ENCODE measurements at regions of chr7 and their contacts with region 1.

Region 1: DNA sequence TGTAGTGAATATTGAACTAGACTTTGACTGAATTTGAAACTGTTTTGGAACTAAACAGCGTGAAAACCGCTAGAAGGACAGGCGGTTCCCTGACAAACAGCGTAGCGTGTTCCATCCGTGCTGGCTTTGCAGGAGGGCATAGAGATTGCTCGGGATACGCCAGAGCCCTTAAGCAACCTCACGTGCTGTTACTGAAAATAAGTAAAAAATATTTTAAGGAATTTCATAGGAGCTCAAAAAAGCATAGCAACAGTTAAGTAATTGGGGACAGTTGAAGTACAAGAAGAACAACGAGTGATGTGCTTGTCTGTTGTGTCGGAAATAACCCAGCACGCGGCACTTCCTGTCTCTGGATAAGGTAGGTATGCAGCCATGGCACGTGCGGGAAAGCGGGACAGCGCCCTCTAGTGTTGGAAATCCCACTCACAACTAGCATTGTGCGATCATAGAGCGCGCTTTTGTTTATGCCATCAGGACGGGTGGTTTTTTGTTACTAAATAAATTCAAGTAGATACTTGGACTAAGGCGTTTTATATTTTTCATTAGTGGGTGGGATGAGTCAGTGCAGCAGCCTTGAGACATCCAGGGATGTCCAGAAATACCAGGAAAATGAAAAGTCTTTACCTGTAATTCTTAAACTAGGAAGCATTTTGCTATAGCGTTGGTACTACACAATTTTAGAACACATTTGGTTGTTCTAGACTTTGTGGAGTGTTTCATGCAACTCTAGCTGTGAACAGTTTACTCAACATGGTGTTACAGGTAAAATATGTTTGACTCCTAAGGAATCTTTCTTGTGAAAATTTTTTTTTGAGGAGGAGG is 50.4 kb downstream of the DNAJB6 start:
- DNase-seq: peak; percentile 92
- H3K4me3 Mint-ChIP-seq: peak overlapping the region; percentile 16
- H3K27ac Mint-ChIP-seq: peak overlapping the region; percentile 64
- H3K4me1 Mint-ChIP-seq: peaks cover 56% of the 10 kb centered on the region
- H3K27me3 Mint-ChIP-seq: no peaks in the 10 kb centered on the region

Region 2: GRCh38 chr7:157355784-157356539 is 31.2 kb before region 1 on chr7:
- CTCF ChIA-PET with region 1: interaction called, 10 read pairs
- POLR2A ChIA-PET with region 1: interaction called, 3 read pairs
- DNase-seq: no peak
- H3K4me3 Mint-ChIP-seq: no peak overlapping the region
- H3K27ac Mint-ChIP-seq: peak overlapping the region; percentile 45
- H3K4me1 Mint-ChIP-seq: peaks cover 70% of the 10 kb centered on the region
- H3K27me3 Mint-ChIP-seq: no peaks in the 10 kb centered on the region

Region 3: GRCh38 chr7:157368955-157369354 is 18.2 kb before region 1 on chr7:
- CTCF ChIA-PET with region 1: interaction called, 11 read pairs
- POLR2A ChIA-PET with region 1: no interaction called
- DNase-seq: no peak
- H3K4me3 Mint-ChIP-seq: no peak overlapping the region
- H3K27ac Mint-ChIP-seq: no peak overlapping the region
- H3K4me1 Mint-ChIP-seq: peaks cover 19% of the 10 kb centered on the region
- H3K27me3 Mint-ChIP-seq: no peaks in the 10 kb centered on the region

Region 4: DNA sequence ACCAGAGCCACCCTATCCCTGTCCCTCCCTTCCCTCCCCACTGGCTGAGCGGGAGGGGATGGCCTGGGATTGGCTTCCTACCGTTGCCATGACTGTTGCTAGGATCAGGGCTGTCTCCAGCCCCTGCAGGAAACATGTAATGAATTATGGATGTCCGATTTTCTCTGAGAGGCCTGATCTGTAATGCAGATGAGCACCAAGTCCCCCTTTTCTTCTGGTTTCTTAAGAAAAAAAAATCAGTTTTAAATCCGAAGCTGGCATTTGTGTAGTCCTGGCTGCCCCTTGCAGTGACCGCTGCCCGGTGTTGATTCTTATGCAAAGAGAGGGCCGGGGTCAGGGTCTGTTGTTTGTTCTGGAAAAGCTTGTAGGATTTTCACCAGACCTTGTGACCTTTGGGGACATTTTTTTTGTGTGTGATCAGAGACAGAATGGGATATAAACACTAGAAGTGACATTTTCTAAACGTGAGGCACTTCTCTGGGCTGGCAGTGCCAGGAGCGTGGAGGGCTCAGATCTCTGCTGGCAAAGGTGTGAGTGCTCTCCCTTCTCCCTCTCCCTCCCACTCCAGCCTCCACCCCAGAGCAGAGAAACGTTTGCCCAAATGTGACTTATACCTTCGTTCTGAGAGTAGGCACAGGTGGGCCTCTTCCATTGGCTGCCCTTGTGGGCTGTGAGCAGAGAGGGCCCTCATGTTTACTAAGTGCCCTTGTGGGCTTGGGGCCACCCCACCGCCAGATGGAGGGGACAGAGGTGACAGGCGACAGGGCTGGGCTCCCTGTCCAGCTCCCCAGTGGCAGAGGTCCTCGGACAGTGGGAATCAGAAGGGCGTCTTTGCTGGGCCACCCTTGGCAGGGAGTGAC is 77.2 kb after region 1 on chr7:
- CTCF ChIA-PET with region 1: no interaction called
- POLR2A ChIA-PET with region 1: no interaction called
- DNase-seq: peak; percentile 15
- H3K4me3 Mint-ChIP-seq: no peak overlapping the region
- H3K27ac Mint-ChIP-seq: no peak overlapping the region
- H3K4me1 Mint-ChIP-seq: peaks cover 2% of the 10 kb centered on the region
- H3K27me3 Mint-ChIP-seq: peaks cover 18% of the 10 kb centered on the region

Measured in activated CD4-positive, alpha-beta memory T cell treated with anti-CD3 and anti-CD28 coated beads, Interleukin-2, amount 10 ng/mL, durations not matched to agents 7 days and 5 days (primary cell).